SK-N-SH (cell line): ENCODE measurements at regions of chr15 and their contacts with region 1.

Region 1: DNA sequence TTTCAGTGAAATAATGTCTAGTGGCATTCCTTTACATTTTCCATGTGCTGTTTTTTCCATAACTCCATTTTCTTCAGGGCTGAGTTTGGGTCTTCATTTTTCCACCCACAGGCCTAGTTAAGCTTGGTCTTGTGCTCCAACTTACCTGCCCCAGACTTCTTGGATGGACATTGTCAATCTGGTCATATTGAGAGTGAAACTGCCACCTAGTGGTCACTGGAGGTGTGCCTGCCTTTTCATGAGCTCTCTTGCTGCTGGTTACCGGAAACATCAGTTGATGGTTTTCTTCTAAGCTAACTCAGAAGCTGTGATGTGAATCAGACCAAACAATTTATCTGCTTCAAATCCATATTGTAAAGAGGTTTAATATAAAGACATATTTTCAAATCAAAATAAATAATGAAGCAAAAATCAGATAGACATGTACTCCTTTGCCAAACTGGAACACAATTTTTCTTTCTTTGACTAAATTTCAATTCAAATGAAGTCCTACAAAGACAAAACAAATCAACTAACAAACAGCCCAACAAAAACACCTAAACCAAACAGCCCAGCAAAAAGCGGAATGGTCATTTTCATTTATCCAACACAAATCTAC is 135.1 kb upstream of the RASGRP1 start:
- DNase-seq: peak; percentile 39
- H3K4me3 ChIP-seq: peak overlapping the region in 1 of 2 experiments; percentile 5; a peak in 1 of 4 replicates
- H3K27ac ChIP-seq: no peak overlapping the region
- H3K4me1 ChIP-seq: peaks cover 0 to 38% of the 10 kb centered on the region in 2 experiments; a peak in 2 of 4 replicates
- H3K27me3 ChIP-seq: no peaks in the 10 kb centered on the region
- CTCF ChIP-seq: peak; percentile 91
- EP300 ChIP-seq: no peak
- RAD21 ChIP-seq: peak; percentile 66

Region 2: GRCh38 chr15:38474155-38474757 is 225.5 kb before region 1 on chr15:
- CTCF ChIA-PET with region 1: interaction called, 17 read pairs
- POLR2A ChIA-PET with region 1: no interaction called
- DNase-seq: peak; percentile 62
- H3K4me3 ChIP-seq: no peak overlapping the region
- H3K27ac ChIP-seq: no peak overlapping the region
- H3K4me1 ChIP-seq: no peaks in the 10 kb centered on the region; a peak in 2 of 4 replicates
- H3K27me3 ChIP-seq: no peaks in the 10 kb centered on the region
- CTCF ChIP-seq: peak; percentile 81
- EP300 ChIP-seq: no peak
- RAD21 ChIP-seq: peak; percentile 97

Region 3: DNA sequence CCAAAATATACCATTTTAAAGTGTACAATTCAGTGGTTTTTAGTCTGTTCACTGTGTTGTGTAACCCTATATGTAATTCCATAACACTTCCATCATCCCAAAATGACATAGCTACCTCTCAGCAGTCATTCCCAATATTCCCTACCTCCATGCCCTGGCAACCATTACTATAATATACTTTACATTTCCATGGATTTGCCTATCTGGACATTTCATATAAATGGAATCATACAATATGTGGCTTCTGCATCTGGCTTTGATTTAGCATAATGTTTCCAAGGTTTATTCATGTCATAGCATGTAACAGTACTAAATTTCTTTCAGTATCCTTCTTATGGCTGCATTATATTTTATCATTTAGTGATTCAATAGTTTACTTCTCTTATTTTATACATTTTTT is 220.5 kb before region 1 on chr15:
- CTCF ChIA-PET with region 1: interaction called, 17 read pairs
- POLR2A ChIA-PET with region 1: no interaction called
- DNase-seq: no peak
- H3K4me3 ChIP-seq: no peak overlapping the region; a peak in 1 of 4 replicates
- H3K27ac ChIP-seq: peak overlapping the region in 1 of 2 experiments; percentile 66; a peak in 2 of 4 replicates
- H3K4me1 ChIP-seq: peaks cover 0 to 9% of the 10 kb centered on the region in 2 experiments; a peak in 3 of 4 replicates
- H3K27me3 ChIP-seq: no peaks in the 10 kb centered on the region
- CTCF ChIP-seq: no peak
- EP300 ChIP-seq: no peak
- RAD21 ChIP-seq: no peak

Region 4: DNA sequence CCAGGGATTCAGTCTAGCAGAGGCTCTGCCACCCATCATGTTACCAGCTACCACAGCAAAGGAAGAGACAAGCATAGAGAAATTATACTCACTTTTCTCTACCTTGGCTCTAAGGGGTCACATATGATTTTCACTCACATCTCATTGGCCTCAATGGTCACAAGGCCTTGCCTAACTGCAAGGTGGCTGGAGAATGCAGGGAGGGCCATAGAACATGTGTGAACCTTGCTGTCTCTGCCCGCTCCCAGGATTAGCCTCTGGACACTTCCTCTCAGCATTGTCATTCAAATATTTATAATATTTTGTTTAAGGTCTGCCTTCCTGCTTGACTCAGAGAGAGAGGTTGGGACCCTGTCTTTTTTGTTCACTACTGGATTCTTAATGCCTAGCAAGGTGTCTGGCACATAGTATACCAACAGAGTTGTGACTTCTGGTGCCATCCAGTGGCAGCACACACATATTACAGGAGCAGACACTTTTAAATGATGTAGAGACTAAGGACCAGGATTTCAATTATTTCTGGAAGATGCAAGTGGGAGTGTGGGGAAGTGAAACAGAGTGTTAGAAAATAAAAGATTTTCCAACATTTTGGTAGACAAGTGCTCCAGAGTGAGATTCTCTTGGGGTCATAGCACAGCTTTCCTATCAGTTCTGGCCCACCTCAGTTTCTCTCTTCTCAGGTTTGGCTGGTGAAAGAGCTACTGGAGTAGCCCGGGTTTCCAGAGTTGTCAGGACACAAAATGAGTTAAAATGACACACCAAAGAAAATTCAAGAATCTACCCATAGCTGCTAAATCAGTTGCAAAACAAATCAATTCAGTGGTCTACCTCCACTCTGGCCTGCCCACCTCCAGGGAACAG is 16.1 kb before region 1 on chr15:
- CTCF ChIA-PET with region 1: interaction called, 84 read pairs
- POLR2A ChIA-PET with region 1: no interaction called
- DNase-seq: peak; percentile 43
- H3K4me3 ChIP-seq: no peak overlapping the region; a peak in 1 of 4 replicates
- H3K27ac ChIP-seq: no peak overlapping the region
- H3K4me1 ChIP-seq: peaks cover 0 to 12% of the 10 kb centered on the region in 2 experiments; a peak in 2 of 4 replicates
- H3K27me3 ChIP-seq: no peaks in the 10 kb centered on the region
- CTCF ChIP-seq: peak; percentile 85
- EP300 ChIP-seq: no peak
- RAD21 ChIP-seq: peak; percentile 92

Region 5: DNA sequence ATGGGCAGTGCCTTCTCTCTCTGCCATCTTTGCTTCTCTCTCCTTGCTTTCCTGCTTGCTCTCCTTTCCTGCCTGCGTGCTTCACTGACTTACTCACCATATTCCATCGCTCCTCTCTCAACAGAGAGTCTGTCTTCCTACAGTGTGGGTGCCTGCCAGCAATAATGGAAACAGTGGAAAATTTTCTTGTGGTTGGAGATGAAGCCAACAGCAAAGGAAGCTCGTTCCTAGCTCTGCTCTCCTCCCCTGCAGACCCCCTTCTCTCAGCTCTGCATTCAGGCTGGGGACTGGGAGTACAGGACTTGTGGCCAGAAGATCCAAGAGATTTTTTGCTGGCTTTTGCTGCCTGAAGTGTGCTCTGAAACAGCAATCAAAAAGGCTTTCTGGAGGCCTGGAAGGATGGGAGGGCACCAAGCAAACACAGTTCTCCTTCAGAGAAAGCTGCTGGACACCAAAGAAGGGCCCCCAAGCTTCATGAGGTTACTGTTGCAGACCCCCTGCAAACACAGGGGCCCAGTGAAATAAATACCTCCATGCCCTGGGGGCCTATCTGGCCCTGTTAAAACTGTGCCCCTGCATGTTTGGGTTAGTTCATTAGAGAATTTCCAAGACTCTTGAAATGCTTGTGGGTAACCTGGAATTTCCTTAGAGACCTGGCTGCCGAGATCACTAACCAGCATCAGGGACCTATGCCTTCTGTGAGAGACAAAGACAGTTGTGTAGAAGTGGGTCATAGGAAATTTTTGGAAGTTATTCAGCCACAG is 14.8 kb after region 1 on chr15:
- CTCF ChIA-PET with region 1: interaction called, 30 read pairs
- POLR2A ChIA-PET with region 1: interaction called, 3 read pairs
- DNase-seq: no peak
- H3K4me3 ChIP-seq: no peak overlapping the region
- H3K27ac ChIP-seq: peak overlapping the region; percentile 80 to 95
- H3K4me1 ChIP-seq: peaks cover 3 to 5% of the 10 kb centered on the region in 2 experiments; a peak in 2 of 4 replicates
- H3K27me3 ChIP-seq: no peaks in the 10 kb centered on the region
- CTCF ChIP-seq: no peak
- EP300 ChIP-seq: peak in 1 of 2 experiments; percentile 89; a peak in 2 of 4 replicates
- RAD21 ChIP-seq: no peak